ENCODE measurements at regions of chr11 and their contacts with region 1.

Region 1: DNA sequence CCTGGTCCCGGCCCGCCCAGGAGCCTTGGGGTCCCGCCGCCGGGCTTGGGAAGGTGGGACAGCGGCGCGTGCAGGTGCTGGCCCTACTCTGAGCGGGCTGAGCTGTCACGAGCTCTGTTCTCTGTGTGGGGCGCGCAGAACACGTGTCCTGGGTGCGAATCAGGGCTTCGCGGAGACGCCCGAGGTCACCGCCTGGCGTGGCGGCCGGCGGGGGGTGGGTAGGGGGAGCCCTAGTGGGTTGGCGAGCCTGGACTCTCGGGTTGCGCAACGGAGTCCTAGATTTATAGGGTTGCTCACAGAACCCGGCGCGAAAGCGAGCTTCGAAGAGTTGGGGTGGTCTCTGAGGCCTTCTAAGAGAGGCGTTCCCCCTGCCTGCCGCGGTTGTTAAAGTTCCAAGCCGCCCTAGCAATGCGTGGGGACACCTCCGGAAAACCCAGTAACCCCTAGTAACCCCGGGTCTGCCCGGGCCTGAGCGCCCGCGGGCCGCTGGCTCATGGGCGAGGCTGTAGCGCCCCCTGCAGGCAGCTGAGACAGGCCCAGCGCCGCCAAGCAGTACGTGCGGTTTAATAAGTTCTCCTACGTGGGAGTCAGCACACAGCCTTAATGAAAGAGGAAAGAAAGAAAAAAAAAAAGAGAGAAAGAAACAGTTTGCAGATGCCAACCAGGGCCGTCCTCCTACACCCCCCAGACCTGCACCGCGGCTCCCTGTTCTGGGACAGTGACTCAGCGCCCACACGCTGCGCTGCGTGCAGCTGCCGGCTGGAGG is 2.8 kb downstream of the ADM start:
- DNase-seq: peak; percentile 86
- H3K4me3 ChIP-seq: peak overlapping the region; percentile 73
- H3K27ac ChIP-seq: peak overlapping the region; percentile 66
- H3K4me1 ChIP-seq: peaks cover 6% of the 10 kb centered on the region
- H3K27me3 ChIP-seq: no peaks in the 10 kb centered on the region
- CTCF ChIP-seq: peak; percentile 99

Region 2: GRCh38 chr11:9613118-9613829 is 694.4 kb before region 1 on chr11:
- CTCF ChIA-PET with region 1: interaction called, 3 read pairs
- POLR2A ChIA-PET with region 1: no interaction called
- intact Hi-C with region 1: loop called (anchors 10 kb)
- DNase-seq: peak; percentile 95
- H3K4me3 ChIP-seq: peak overlapping the region; percentile 48
- H3K27ac ChIP-seq: peak overlapping the region; percentile 72
- H3K4me1 ChIP-seq: no peaks in the 10 kb centered on the region
- H3K27me3 ChIP-seq: no peaks in the 10 kb centered on the region
- CTCF ChIP-seq: peak; percentile 91

Region 3: GRCh38 chr11:9757809-9758636 is 549.6 kb before region 1 on chr11:
- CTCF ChIA-PET with region 1: no interaction called
- POLR2A ChIA-PET with region 1: no interaction called
- intact Hi-C with region 1: loop called (anchors 2 kb)
- DNase-seq: peak; percentile 85
- H3K4me3 ChIP-seq: peak overlapping the region; percentile 64
- H3K27ac ChIP-seq: peak overlapping the region; percentile 93
- H3K4me1 ChIP-seq: peaks cover 24% of the 10 kb centered on the region
- H3K27me3 ChIP-seq: no peaks in the 10 kb centered on the region
- CTCF ChIP-seq: peak; percentile 50; the same call in 1 of the 2 replicates

Region 4: DNA sequence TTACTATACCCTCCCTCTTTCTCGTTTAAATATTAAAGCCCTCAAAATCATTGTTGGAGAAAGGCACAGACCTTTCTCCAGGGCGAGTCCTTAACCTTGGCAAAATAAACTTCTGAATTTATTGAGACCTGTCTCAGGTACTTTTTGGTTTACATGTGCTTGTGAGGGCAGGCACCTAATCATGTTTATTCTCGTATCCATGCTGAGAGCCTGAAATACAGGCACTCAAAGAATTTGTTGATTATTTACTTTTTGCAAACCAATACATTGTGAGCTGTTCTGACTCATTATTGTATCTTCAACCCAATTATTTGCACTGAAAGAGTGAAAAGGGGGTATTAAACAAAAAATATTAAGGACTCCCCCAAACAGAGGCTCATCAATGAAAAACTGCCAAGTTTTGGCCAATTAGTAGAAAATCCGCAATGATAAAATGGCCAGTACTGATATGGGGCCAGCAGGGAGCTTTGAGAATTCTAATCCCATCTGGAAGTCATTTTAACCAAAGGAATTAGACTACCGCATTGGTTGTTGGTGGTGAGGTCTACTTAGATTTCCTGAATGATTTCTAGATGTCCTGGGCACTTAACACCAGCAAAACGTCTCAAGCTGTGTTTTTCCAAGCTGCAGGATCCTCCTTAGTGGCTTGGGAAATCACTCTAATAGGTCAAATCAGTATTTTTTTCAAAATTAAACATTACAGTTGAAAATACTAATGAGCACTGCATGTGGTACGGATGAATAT is 486.4 kb before region 1 on chr11:
- CTCF ChIA-PET with region 1: no interaction called
- POLR2A ChIA-PET with region 1: interaction called, 11 read pairs
- intact Hi-C with region 1: no loop called
- DNase-seq: peak; percentile 37
- H3K4me3 ChIP-seq: no peak overlapping the region
- H3K27ac ChIP-seq: no peak overlapping the region
- H3K4me1 ChIP-seq: peaks cover 3% of the 10 kb centered on the region
- H3K27me3 ChIP-seq: no peaks in the 10 kb centered on the region
- CTCF ChIP-seq: no peak

Region 5: GRCh38 chr11:9861860-9862725 is 445.5 kb before region 1 on chr11:
- CTCF ChIA-PET with region 1: interaction called, 3 read pairs
- POLR2A ChIA-PET with region 1: no interaction called
- intact Hi-C with region 1: loop called (anchors 2 kb)
- DNase-seq: peak; percentile 81
- H3K4me3 ChIP-seq: no peak overlapping the region
- H3K27ac ChIP-seq: peak overlapping the region; percentile 49
- H3K4me1 ChIP-seq: peaks cover 49% of the 10 kb centered on the region
- H3K27me3 ChIP-seq: no peaks in the 10 kb centered on the region
- CTCF ChIP-seq: peak; percentile 86

Region 6: DNA sequence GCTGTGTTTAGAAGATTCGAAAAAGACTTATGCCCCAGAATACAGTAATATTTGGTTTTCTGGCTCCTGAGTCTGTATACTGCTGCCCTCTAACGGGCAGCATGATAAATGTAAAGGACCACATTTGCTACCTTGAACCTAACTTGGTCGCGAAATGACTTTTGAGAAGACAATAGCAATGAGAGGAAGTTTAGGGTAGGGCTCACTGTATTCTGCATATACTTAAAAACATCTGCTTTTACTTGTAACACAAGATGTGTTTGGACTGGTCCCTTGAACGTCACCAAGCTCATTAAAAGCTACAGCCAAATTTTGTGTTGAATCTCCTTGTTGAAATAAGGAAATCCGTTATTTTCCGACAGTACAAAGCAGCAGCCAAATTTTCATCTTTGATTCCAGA is 334.6 kb before region 1 on chr11:
- CTCF ChIA-PET with region 1: no interaction called
- POLR2A ChIA-PET with region 1: no interaction called
- intact Hi-C with region 1: loop called (anchors 5 kb)
- DNase-seq: peak; percentile 68
- H3K4me3 ChIP-seq: no peak overlapping the region
- H3K27ac ChIP-seq: no peak overlapping the region
- H3K4me1 ChIP-seq: peaks cover 12% of the 10 kb centered on the region
- H3K27me3 ChIP-seq: no peaks in the 10 kb centered on the region
- CTCF ChIP-seq: peak; percentile 78

Region 7: GRCh38 chr11:10208131-10208575 is 99.5 kb before region 1 on chr11:
- CTCF ChIA-PET with region 1: no interaction called
- POLR2A ChIA-PET with region 1: no interaction called
- intact Hi-C with region 1: loop called (anchors 2 kb)
- DNase-seq: peak; percentile 50
- H3K4me3 ChIP-seq: no peak overlapping the region
- H3K27ac ChIP-seq: no peak overlapping the region
- H3K4me1 ChIP-seq: peaks cover 3% of the 10 kb centered on the region
- H3K27me3 ChIP-seq: no peaks in the 10 kb centered on the region
- CTCF ChIP-seq: peak; percentile 68

Region 8: GRCh38 chr11:10233581-10233980 is 74.0 kb before region 1 on chr11:
- CTCF ChIA-PET with region 1: no interaction called
- POLR2A ChIA-PET with region 1: no interaction called
- intact Hi-C with region 1: no loop called
- DNase-seq: peak; percentile 29
- H3K4me3 ChIP-seq: no peak overlapping the region
- H3K27ac ChIP-seq: no peak overlapping the region
- H3K4me1 ChIP-seq: no peaks in the 10 kb centered on the region
- H3K27me3 ChIP-seq: no peaks in the 10 kb centered on the region
- CTCF ChIP-seq: no peak

Measured in A673 (cell line).